Activated CD4-positive, alpha-beta memory T cell treated with anti-CD3 and anti-CD28 coated beads, Interleukin-2, amount 10 ng/mL, durations not matched to agents 7 days and 5 days (primary cell): ENCODE measurements at regions of chr7 and their contacts with region 1.

Region 1: DNA sequence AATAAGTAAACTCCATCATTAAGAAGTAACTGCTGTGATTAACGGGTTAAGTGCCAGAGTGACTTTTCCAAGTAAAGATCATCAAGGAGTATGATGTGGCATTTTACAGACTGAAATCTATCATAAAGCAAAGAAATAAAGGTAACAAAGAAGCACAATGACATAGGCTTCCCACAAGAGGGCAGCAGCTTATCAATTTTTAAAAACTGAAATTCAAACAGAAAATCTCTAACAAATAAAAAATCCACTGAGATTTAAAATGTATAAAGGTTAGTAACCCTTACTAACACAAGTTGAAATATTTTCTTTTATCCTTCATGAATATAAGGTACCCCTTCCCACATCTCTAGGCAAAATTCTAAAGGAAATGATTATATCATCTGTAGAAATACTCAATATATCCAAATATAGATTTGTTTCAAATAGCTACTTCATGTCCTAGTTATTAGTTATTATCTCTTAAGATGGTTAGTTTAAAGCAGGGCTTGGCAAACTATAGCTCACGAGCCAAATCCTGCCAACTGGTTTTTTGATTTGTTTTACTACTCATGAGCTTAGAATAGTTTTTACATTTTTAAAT is 29.2 kb downstream of the FAM3C start:
- DNase-seq: no peak
- H3K4me3 Mint-ChIP-seq: no peak overlapping the region
- H3K27ac Mint-ChIP-seq: no peak overlapping the region
- H3K4me1 Mint-ChIP-seq: peaks cover 50% of the 10 kb centered on the region
- H3K27me3 Mint-ChIP-seq: no peaks in the 10 kb centered on the region

Region 2: GRCh38 chr7:121278120-121279021 is 88.6 kb before region 1 on chr7:
- CTCF ChIA-PET with region 1: no interaction called
- POLR2A ChIA-PET with region 1: no interaction called
- DNase-seq: no peak
- H3K4me3 Mint-ChIP-seq: no peak overlapping the region
- H3K27ac Mint-ChIP-seq: no peak overlapping the region
- H3K4me1 Mint-ChIP-seq: peaks cover 12% of the 10 kb centered on the region
- H3K27me3 Mint-ChIP-seq: peaks cover 39% of the 10 kb centered on the region

Region 3: DNA sequence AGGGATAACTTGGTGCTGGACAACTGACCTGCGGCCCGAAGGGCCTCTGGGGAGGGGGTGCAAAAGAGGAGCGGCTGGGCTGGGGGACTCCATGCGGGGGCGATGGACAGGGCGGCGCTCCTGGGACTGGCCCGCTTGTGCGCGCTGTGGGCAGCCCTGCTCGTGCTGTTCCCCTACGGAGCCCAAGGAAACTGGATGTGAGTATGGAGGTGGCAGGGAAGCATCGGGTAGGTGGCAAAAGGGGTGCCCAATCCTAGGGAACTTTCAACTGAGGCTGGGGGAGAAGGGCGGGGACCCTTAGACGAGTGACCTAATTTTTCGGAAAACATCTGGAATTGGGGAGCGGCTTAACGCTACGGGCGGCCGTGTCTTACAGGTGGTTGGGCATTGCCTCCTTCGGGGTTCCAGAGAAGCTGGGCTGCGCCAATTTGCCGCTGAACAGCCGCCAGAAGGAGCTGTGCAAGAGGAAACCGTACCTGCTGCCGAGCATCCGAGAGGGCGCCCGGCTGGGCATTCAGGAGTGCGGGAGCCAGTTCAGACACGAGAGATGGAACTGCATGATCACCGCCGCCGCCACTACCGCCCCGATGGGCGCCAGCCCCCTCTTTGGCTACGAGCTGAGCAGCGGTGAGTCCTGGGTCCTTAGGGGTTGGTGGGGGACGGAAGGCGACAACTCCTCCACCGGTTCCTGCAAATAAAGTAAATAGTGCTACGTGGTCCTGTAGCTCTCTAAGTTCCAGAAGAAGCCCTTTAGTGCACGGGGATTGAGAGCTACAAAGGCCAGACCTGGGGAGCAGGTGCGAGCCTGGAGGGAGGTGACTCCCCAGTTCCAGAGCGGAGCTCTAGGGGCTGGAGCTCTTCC is 37.5 kb before region 1 on chr7:
- CTCF ChIA-PET with region 1: interaction called, 11 read pairs
- POLR2A ChIA-PET with region 1: no interaction called
- DNase-seq: peak; percentile 37
- H3K4me3 Mint-ChIP-seq: peak overlapping the region; percentile 43
- H3K27ac Mint-ChIP-seq: no peak overlapping the region
- H3K4me1 Mint-ChIP-seq: peaks cover 20% of the 10 kb centered on the region
- H3K27me3 Mint-ChIP-seq: peaks cover 57% of the 10 kb centered on the region

Region 4: GRCh38 chr7:121379930-121380329 is 13.0 kb after region 1 on chr7:
- CTCF ChIA-PET with region 1: interaction called, 12 read pairs
- POLR2A ChIA-PET with region 1: no interaction called
- DNase-seq: no peak
- H3K4me3 Mint-ChIP-seq: no peak overlapping the region
- H3K27ac Mint-ChIP-seq: no peak overlapping the region
- H3K4me1 Mint-ChIP-seq: peaks cover 28% of the 10 kb centered on the region
- H3K27me3 Mint-ChIP-seq: no peaks in the 10 kb centered on the region

Region 5: GRCh38 chr7:121437456-121438127 is 70.7 kb after region 1 on chr7:
- CTCF ChIA-PET with region 1: interaction called, 13 read pairs
- POLR2A ChIA-PET with region 1: interaction called, 6 read pairs
- DNase-seq: no peak
- H3K4me3 Mint-ChIP-seq: no peak overlapping the region
- H3K27ac Mint-ChIP-seq: peak overlapping the region; percentile 86
- H3K4me1 Mint-ChIP-seq: peaks cover 48% of the 10 kb centered on the region
- H3K27me3 Mint-ChIP-seq: no peaks in the 10 kb centered on the region

Region 6: GRCh38 chr7:121530227-121531174 is 163.6 kb after region 1 on chr7:
- CTCF ChIA-PET with region 1: interaction called, 7 read pairs
- POLR2A ChIA-PET with region 1: interaction called, 23 read pairs
- DNase-seq: peak; percentile 83
- H3K4me3 Mint-ChIP-seq: peak overlapping the region; percentile 31
- H3K27ac Mint-ChIP-seq: peak overlapping the region; percentile 93
- H3K4me1 Mint-ChIP-seq: peaks cover 47% of the 10 kb centered on the region
- H3K27me3 Mint-ChIP-seq: no peaks in the 10 kb centered on the region

Region 7: GRCh38 chr7:121547544-121548092 is 180.7 kb after region 1 on chr7:
- CTCF ChIA-PET with region 1: interaction called, 84 read pairs
- POLR2A ChIA-PET with region 1: interaction called, 14 read pairs
- DNase-seq: no peak
- H3K4me3 Mint-ChIP-seq: no peak overlapping the region
- H3K27ac Mint-ChIP-seq: no peak overlapping the region
- H3K4me1 Mint-ChIP-seq: peaks cover 50% of the 10 kb centered on the region
- H3K27me3 Mint-ChIP-seq: no peaks in the 10 kb centered on the region

Region 8: DNA sequence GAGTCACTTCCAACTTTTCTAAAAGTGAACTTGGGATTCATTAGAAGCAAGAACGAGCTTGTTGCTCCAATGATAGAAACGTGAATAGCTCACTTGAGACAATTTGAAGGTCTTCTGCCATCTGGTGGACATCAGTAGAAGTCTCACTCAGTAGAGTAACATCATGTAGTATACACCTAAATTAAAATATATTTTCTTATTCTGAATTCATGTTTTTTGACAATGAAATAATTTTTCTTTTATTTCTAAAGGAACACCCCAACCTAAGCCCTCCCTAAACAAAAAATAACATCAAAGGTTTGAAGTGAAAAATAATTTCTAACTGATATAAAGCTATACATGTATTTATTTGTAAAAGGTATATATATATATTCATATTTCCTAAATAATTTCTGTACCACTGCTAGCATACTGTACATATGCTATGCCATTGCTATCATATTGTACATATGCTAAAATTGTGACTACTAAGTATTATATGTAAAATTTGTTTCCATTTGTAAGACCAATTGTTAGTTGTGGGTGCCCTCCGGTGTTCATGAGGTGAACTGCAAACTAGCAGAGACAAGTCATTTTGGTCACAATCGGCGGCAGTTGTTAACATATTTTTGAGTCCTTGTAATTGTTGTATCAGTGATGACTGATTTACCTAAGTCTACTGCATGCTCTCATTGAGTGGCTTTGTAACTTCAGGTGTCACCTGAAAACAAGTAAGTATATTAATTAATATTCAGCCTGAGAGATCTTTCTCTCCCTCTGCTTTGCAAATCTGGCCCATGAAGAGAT is 627.9 kb after region 1 on chr7:
- CTCF ChIA-PET with region 1: interaction called, 14 read pairs
- POLR2A ChIA-PET with region 1: no interaction called
- DNase-seq: peak; percentile 50
- H3K4me3 Mint-ChIP-seq: no peak overlapping the region
- H3K27ac Mint-ChIP-seq: no peak overlapping the region
- H3K4me1 Mint-ChIP-seq: no peaks in the 10 kb centered on the region
- H3K27me3 Mint-ChIP-seq: no peaks in the 10 kb centered on the region